Ovary (tissue), 10 donors: ENCODE measurements at regions of chr17 and their contacts with region 1.

Region 1: DNA sequence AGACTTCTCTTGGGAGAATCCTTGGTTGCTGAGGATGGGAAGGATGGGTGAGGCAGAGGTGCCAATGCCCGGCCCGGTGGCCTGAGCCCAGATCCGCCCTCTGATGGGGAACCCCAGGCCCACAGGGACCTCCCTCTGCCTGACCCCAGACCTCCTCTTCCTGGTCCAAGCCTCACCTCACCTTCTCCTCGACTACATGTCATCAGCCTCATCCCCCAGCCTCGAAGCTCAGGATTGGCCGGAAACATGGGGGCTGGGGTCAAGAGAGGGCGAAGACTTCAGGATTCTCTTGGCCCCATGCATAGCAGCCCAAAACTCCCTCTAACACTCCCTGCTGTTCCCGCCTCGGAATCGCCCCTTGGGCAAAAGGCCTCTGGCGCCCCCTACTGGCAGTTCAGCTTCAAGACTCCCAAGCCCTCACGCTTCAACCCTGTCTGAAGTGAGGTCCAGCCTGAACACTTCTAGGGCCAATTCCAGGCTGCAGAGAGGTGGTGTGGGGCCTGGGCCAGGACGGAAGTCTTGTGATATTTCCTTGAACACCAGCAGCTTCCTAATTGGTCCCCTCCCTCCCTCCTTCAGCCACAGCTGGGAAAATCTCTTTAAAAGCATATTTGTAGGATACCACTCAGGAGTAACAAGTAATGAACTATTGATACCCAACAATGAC is 47.2 kb downstream of the ARHGAP27 start:
- DNase-seq: peak; percentile 83 to 92 (median 90)
- H3K4me3 ChIP-seq: no peak overlapping the region
- H3K27ac ChIP-seq: no peak overlapping the region
- H3K4me1 ChIP-seq: no peaks in the 10 kb centered on the region
- H3K27me3 ChIP-seq: no peaks in the 10 kb centered on the region
- CTCF ChIP-seq: peak; percentile 86 to 96 (median 93)
- EP300 ChIP-seq: no peak
- POLR2A ChIP-seq: no peak

Region 2: DNA sequence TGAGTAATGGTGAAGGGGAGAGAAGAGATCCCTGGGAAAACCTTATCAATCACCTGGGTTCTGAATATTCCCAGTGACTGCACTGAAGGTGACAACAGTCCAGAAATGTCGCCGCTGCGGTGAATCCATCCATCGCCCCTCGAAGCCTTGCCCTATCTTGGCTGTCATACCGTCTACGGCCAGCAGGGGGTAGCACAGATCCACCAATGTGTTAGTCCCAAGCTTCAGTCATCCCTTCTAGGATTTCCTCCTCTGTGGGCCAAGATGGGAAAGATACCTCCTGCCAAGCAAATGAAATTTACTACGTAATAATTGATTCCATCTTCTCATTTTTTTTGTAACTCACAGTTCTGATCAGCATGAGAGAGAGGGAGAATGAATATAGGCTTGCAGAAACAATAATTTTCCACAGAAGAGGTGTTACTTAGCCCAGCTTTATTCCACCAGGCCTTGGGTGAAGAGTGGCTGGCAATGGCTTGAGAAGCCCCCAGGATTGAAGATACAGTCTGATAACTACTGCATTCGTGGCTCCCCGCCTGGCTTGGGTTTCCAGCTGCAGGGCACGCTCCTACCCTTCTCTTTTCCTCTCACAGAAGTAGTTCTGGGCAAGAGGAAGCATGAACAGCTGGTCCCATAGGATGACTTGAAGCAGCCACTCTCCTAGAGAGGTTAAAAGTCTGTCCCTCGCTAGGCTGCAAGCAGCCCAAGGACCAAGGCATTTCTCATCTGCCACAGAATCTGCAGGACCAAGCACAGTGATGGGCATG is 166.4 kb before region 1 on chr17:
- intact Hi-C with region 1: loop called (anchors 1 to 5 kb)
- DNase-seq: peak; percentile 69 to 89 (median 87)
- H3K4me3 ChIP-seq: no peak overlapping the region
- H3K27ac ChIP-seq: no peak overlapping the region
- H3K4me1 ChIP-seq: no peaks in the 10 kb centered on the region
- H3K27me3 ChIP-seq: no peaks in the 10 kb centered on the region
- CTCF ChIP-seq: peak; percentile 60 to 95 (median 95)
- EP300 ChIP-seq: no peak
- POLR2A ChIP-seq: no peak

Region 3: DNA sequence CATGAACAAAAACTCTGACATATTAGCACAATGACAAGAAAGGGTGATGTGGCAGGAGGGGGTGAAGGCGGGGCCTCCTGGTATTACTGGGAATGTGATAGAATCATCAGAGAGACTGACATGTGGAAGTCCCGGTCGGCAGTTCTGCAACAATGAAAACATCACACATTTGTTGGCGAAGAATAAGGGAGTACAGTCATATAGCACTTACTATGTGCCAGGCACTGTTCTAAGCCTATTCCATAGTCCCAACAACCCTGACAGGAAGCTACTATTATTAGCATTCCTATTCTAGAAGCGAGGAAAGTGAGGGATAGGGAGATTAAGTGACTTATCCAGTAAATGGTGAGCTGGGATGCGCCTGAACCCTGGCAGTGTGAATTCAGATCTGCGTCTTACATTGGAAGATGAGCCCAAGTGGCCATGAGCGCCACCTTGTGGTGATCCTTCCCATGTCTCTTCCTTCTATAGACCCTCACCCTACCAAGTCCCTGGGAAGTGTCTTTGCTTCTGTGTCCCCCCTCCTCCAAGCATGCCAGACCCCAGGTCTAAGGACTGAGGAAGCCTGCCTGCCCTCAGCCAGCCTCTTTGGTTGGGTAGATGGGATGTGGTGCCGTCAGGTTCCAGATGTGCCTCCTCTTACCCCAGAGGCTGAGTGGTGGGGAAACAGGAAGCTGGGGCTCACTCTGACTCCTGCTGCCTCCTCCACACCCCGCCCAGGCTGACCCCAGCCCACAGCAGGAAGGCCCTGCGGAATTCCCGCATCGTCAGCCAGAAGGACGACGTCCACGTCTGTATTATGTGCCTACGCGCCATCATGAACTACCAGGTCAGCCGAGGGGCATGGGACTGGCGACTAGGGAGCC is 149.8 kb before region 1 on chr17:
- intact Hi-C with region 1: loop called in 1 of 4 experiments (anchors 5 kb)
- DNase-seq: peak; percentile 37 to 75 (median 68)
- H3K4me3 ChIP-seq: no peak overlapping the region
- H3K27ac ChIP-seq: no peak overlapping the region
- H3K4me1 ChIP-seq: no peaks in the 10 kb centered on the region
- H3K27me3 ChIP-seq: no peaks in the 10 kb centered on the region
- CTCF ChIP-seq: peak in 1 of 3 donors; percentile 30
- EP300 ChIP-seq: no peak
- POLR2A ChIP-seq: no peak

Region 4: DNA sequence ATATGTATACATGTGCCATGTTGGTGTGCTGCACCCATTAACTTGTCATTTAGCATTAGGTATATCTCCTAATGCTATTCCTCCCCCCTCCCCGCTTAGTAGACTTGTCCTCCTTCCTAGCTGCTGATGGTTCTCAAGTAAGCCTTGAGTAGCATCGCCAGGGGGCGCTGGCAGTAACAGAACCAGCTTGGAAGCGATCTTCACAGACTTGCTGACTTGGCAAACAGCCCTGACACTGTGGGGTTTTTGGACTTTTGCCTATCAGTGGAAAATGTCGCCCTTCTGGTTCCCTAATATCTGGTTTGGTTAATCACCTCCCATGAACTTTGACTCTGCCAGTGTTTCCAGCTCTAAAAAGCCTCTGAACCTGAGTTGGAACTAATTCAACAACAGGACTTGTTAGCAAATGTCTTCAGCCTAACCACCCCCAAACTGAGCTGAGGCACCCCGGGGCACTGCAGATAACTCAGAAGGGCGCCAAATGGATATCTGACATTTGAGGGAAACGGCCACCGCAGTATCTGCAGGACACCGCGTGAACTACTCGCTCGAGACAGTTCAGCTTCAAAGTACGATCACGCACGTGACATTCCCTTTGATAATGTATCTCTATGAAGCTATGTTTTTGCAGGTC is 108.1 kb before region 1 on chr17:
- intact Hi-C with region 1: loop called (anchors 2 to 10 kb)
- DNase-seq: peak; percentile 89 to 94 (median 92)
- H3K4me3 ChIP-seq: no peak overlapping the region
- H3K27ac ChIP-seq: peak overlapping the region in 1 of 2 donors; percentile 35
- H3K4me1 ChIP-seq: peaks cover 10% of the 10 kb centered on the region
- H3K27me3 ChIP-seq: no peaks in the 10 kb centered on the region
- CTCF ChIP-seq: peak; percentile 54 to 87 (median 84)
- EP300 ChIP-seq: no peak
- POLR2A ChIP-seq: no peak